Right ventricle myocardium superior (tissue), 1 donor: ENCODE measurements at regions of chr14 and their contacts with region 1.

Region 1: DNA sequence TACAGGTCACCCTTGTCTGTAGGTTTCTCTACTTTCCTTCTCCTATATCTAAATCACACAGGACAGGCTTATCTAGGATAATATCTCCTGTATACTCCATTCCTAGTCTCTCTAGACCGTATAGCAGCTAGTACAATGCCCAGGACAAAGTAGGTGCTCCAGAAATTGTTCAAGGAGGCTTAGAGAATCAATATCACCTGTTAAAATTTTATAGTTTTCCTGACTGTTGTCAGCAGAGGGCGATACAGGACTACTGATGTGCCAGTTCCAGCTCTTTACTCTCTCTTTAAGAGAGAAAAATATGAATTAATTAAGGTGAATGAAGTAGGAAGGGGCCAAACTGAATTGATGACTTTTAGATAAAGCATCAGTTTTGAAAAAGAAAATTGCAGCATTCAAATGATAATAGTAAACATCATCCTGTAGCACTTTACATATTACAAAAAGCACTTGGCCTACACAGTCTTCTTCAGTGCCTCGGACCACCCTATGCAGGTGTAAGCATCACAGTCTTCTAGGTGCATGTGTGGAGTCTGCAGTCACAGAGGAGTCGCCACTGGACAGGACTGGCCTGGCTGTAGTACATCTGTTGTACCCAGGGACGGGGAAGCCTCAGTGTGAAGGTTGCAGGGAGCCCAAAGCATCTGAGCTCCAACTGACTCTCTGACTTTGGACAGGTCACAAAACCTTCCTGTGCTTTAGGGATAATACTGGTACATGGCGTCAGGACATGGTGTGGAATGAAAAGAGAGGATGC is 61.9 kb upstream of the MAX start:
- DNase-seq: no peak
- ATAC-seq: peak; percentile 58

Region 2: DNA sequence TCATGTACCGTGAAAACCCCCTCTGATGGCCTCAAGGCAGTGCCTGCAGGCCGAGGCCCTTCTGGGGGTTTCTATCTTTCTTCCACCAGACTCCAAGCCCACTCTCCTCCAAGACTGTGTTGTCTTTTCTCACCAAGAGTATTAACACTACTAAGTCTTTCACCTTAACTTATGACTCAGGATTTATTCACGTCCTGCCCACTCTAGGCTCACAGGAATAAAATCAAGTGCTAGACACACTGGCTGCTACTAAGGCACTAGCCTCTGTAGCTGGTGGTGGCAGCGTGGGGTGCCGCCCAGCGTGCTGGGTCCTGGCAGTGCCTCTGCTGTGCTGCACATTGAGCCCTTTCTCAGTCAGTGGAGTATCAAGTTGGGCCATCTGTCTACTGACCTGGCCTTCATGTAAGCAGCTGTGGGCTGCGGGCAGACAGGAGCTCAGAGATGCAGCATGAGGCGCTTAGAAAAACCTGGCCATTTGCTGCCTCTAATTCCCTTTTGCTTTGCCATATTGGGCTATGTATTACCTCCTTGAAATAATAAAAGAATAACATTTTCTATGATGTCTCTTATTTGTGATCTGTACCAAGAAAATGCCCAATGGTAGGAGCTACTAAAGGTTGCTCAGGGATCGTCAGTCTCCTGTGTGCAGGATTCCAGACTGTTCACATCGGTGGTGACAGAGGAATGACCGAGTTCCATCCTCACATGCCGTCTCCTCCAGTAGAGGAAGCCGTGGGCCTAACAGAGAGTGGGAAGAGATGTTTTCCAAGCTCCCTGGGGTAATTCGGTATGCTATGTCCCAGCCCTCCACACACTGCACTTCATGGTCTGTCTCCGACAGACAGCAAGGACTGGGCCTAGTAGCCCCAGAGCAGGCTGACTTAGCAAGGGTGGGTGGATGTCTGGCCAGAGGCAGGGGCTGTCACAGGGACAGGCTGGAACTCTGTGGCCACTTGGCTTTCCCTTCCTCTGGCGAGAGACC is 101.9 kb before region 1 on chr14:
- intact Hi-C with region 1: no loop called
- DNase-seq: no peak
- ATAC-seq: no peak

Region 3: GRCh38 chr14:65373679-65374039 is 209.4 kb after region 1 on chr14:
- intact Hi-C with region 1: loop called (anchors 10 kb)
- DNase-seq: no peak
- ATAC-seq: peak; percentile 63

Region 4: DNA sequence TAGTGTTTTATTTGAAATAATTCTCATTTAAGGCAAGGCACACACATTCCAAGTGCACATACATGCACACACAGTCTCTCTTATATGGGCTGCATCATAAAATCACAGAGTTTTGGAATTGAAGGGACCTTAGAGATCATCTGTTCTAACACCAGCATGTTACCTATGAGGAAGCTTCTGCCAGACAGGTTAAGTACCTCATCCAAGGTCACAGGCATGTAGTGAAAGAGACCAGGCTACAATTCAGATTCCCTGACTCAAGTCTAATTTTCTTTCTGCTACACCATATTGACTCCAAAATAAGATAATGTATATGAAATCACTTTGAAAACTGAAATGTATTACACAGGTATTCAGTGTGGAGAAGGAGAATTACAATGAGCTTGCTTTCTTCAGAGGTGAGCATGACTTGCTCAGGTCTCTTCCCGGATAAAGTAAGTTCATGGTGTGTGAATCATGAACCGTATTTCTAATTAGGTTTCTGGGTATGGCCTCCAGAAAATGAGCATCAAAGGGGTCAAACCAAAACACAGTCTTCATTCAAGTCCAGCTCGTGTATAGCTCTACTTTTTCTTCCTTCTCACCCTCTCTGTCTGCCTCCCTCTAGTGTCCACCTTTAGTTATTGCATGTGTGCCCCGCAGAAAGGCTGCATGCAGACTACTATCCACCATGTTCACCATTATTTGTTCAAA is 660.2 kb after region 1 on chr14:
- intact Hi-C with region 1: loop called (anchors 5 kb)
- DNase-seq: no peak
- ATAC-seq: peak; percentile 87